Vagina (tissue), 2 donors: ENCODE measurements at regions of chr2 and their contacts with region 1.

Region 1: GRCh38 chr2:231104115-231104713 is 20.6 kb downstream of the HTR2B start:
- DNase-seq: no peak
- H3K4me3 ChIP-seq: no peak overlapping the region
- H3K27ac ChIP-seq: no peak overlapping the region
- H3K4me1 ChIP-seq: no peaks in the 10 kb centered on the region
- H3K27me3 ChIP-seq: no peaks in the 10 kb centered on the region
- CTCF ChIP-seq: peak; percentile 75 to 89 (median 81)
- POLR2A ChIP-seq: no peak

Region 2: DNA sequence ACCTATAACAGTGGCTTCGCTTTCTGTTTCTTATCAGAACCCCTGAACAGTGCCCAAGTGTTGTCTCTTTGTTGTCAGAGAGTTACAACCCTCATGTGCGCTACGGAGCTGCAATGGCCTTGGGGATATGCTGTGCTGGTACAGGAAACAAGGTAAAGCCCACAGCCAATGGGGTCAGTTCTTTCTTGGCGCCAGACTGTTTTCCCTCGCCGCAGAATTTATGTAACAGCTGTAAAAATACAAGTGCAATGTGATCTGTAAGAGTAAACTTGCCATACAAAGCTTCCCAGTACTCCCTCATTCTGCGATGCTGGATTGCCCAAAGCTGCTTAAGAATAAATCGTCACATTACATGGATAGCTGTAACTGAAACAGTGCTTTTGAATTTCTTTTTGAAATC is 34.5 kb after region 1 on chr2:
- intact Hi-C with region 1: no loop called
- DNase-seq: no peak
- H3K4me3 ChIP-seq: no peak overlapping the region
- H3K27ac ChIP-seq: no peak overlapping the region
- H3K4me1 ChIP-seq: peaks cover 7% of the 10 kb centered on the region
- H3K27me3 ChIP-seq: no peaks in the 10 kb centered on the region
- CTCF ChIP-seq: no peak
- POLR2A ChIP-seq: no peak

Region 3: DNA sequence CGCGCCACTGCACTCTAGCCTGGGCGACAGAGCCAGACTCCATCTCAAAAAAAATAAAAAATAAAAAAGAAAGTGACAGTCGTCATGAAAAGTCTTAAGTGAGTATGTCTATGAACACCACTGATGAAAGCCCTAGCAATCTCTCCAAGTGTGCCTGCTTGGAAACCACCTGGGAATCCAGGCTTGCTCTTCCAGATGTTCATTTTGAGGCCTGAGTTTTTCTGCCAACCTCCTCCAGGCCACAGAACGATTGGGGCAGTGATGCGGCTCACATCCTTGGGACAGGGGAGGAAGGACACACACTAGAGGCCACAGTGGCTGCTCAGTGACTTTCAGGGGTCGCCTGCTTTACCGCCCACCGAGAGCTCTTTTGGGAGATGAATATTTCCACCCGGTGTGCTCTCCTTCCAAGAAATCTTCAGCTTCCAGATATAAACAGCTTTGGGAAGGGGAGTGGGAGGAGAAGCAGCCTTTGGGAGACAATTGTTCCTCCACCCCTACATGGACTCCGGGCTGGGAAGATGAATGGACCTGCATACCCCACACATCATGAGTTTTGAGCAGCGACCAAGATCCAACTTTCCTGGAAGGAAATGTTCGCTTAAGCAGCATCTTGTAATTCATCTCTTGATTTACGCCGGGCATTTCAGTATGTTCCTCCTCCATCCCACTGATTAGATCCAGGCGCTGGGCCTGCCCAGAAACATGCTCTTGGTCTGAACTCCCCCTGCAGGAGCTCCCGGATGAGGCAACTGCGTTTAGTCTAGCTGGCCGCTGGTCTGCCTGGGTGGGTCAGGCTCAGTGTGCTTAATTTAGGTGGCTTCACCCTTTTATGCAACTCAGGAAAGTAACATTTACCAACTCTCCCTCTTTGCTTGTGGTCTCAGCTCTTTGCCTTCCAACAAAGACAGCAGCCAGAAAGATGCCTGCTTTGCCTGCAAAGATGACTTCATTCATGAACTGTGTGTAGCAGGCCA is 88.0 kb after region 1 on chr2:
- intact Hi-C with region 1: loop called (anchors 2 kb)
- DNase-seq: peak in 1 of 2 donors; percentile 97
- H3K4me3 ChIP-seq: no peak overlapping the region
- H3K27ac ChIP-seq: peak overlapping the region; percentile 96
- H3K4me1 ChIP-seq: peaks cover 24% of the 10 kb centered on the region
- H3K27me3 ChIP-seq: no peaks in the 10 kb centered on the region
- CTCF ChIP-seq: peak in 2 of 3 experiments; percentile 15 to 74
- POLR2A ChIP-seq: no peak

Region 4: DNA sequence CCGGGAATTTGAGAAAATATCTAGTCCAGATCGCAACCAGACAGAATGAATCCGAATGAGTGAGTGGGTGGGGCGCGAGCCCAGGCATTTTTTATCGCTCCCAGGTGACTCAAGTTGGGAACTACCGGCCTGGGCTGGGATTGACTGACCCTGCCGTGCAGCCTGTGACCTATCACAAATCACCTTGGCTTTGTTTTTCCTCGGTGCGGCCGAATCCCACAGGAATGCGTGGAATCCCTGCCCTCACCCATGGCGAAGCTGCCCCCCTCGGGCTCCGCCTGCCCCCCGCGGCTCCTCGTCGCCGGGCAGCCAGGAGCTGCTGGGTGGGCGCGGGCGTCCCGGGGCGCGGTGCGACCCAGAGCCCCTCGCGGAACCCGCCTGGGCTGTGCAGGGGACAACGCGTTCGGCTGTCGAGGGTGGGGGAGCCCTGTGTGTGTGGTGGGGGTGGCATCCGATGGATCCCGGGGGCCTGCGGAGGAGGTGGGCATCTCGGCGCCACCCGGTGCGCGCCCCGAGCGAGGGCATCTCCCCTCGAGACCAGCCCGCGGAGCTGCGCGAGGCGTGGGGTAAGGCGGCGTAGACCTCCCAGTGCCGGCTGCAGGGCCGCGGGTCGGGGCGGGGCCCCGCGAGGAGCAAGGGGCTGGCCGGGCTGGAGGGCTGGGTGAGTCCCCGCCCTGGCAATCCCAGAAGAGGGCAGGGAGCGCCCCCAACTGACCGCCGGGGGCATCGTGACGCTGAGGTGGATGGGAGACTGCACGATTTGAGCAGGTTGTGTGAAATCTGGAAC is 307.8 kb after region 1 on chr2:
- intact Hi-C with region 1: loop called (anchors 10 kb)
- DNase-seq: peak in 1 of 2 donors; percentile 86
- H3K4me3 ChIP-seq: peak overlapping the region; percentile 56 to 67
- H3K27ac ChIP-seq: peak overlapping the region; percentile 18
- H3K4me1 ChIP-seq: peaks cover 17% of the 10 kb centered on the region
- H3K27me3 ChIP-seq: no peaks in the 10 kb centered on the region
- CTCF ChIP-seq: peak; percentile 19 to 73 (median 57)
- POLR2A ChIP-seq: no peak